ENCODE measurements at regions of chr6 and their contacts with region 1.

Region 1: GRCh38 chr6:142885182-142885867 is 59.7 kb downstream of the HIVEP2 start:
- DNase-seq: peak; percentile 89
- ATAC-seq: peak; percentile 70
- H3K4me3 ChIP-seq: peak overlapping the region; percentile 57
- H3K27ac ChIP-seq: peak overlapping the region; percentile 75
- H3K4me1 ChIP-seq: peaks cover 38% of the 10 kb centered on the region
- H3K27me3 ChIP-seq: no peaks in the 10 kb centered on the region
- CTCF ChIP-seq: no peak
- EP300 ChIP-seq: peak; percentile 93 to 97
- POLR2A ChIP-seq: peak; percentile 49
- RAD21 ChIP-seq: peak; percentile 14; the same call in 1 of the 2 replicates

Region 2: GRCh38 chr6:142746524-142746923 is 138.8 kb before region 1 on chr6:
- CTCF ChIA-PET with region 1: interaction called, 3 read pairs
- POLR2A ChIA-PET with region 1: interaction called, 3 read pairs
- RAD21 ChIA-PET with region 1: interaction called, 10 read pairs
- SMC1A ChIA-PET with region 1: interaction called, 33 read pairs
- in situ Hi-C with region 1: no loop called
- intact Hi-C with region 1: no loop called
- DNase-seq: no peak
- ATAC-seq: peak; percentile 92
- H3K4me3 ChIP-seq: no peak overlapping the region
- H3K27ac ChIP-seq: no peak overlapping the region
- H3K4me1 ChIP-seq: no peaks in the 10 kb centered on the region
- H3K27me3 ChIP-seq: no peaks in the 10 kb centered on the region
- CTCF ChIP-seq: peak; percentile 46 to 60 (median 56); a peak in 5 of 6 replicates
- EP300 ChIP-seq: no peak
- POLR2A ChIP-seq: no peak
- RAD21 ChIP-seq: peak; percentile 67

Region 3: DNA sequence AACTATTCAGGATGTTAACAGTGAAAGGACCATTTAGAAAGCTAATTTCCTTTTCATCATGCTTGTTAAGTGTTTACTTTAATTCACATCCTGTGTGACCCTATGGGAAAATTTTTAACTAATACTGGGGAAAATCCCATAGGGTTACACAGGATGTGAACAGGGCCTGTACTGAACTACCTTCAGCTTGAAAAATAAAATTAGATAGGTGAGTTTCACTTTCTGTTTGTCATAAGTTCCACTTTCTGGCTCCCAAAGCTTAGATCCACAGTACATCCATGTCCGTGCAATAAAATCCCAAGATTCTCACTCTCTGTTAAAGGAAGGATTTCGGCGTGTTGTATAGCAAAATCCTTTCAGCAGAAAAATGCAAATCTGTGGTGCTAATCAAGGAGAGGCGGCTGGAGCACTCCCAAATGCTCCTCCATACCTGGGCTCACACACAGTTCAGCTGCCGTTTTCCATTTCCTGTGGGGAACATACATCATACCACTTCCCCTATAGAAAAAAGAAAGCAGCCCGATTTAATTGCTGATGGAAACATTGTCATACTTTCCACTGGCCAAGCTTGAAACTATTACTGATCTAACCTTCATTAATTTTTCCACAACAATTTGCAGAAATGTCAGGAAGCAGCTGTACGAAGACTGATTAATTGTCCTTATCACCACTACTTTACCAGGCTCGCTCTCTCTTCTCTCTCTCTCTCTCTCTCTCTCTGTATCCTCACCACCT is 65.6 kb before region 1 on chr6:
- CTCF ChIA-PET with region 1: interaction called, 27 read pairs
- POLR2A ChIA-PET with region 1: interaction called, 30 read pairs
- RAD21 ChIA-PET with region 1: interaction called, 110 read pairs
- SMC1A ChIA-PET with region 1: interaction called, 201 read pairs
- in situ Hi-C with region 1: no loop called
- intact Hi-C with region 1: loop called (anchors 1 kb)
- DNase-seq: peak; percentile 90
- ATAC-seq: peak; percentile 67
- H3K4me3 ChIP-seq: peak overlapping the region; percentile 39; the same call in 1 of the 2 replicates
- H3K27ac ChIP-seq: peak overlapping the region; percentile 88
- H3K4me1 ChIP-seq: peaks cover 40% of the 10 kb centered on the region
- H3K27me3 ChIP-seq: no peaks in the 10 kb centered on the region
- CTCF ChIP-seq: no peak
- EP300 ChIP-seq: peak; percentile 51 to 97
- POLR2A ChIP-seq: no peak
- RAD21 ChIP-seq: 0 out of 2 replicates have a peak, but pooled peaks have one; percentile 4

Region 4: DNA sequence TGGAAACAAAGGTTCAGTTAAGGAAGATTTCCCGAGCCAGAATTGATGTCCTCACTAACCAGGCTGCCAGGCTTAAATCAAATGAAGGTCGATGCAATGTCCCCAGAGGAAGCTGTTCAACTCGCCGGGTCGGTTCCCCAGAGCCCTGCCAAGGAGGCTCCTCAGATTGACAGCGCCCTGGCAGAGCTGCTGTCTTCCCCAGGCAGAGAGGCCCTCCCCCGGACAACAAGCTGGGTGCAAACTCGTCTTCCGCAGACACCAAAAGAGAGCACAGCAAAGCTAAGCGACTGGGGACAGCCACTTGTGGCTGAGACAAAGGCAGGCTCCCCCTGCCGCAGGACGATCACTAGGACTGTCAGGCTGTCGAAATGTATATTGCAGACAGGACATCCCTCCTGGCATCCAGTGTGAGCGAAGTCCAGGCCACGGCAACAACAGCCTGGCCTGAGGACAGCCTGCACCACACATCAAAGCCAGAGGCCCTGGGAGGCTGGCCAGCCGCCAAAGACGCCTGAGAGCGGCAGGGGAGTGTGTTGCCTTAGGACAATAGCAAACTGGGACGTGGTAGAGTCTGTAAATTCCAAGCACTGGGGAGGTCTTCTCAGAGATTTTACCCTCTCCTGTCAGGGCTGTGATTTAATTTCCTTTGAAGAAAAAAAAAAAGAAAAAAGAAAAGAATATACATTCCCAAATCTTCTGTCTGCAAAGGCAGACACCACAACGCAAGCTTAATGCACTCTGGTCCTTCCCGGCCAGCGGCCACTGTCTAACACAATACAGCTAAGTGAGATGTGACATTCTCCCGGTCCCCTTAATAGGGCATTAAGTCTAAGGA is 39.5 kb before region 1 on chr6:
- CTCF ChIA-PET with region 1: interaction called, 25 read pairs
- POLR2A ChIA-PET with region 1: interaction called, 46 read pairs
- RAD21 ChIA-PET with region 1: interaction called, 95 read pairs
- SMC1A ChIA-PET with region 1: interaction called, 287 read pairs
- in situ Hi-C with region 1: no loop called
- intact Hi-C with region 1: loop called (anchors 1 kb)
- DNase-seq: no peak
- ATAC-seq: peak; percentile 23
- H3K4me3 ChIP-seq: peak overlapping the region; percentile 48; the same call in 1 of the 2 replicates
- H3K27ac ChIP-seq: peak overlapping the region; percentile 98
- H3K4me1 ChIP-seq: peaks cover 81% of the 10 kb centered on the region
- H3K27me3 ChIP-seq: no peaks in the 10 kb centered on the region
- CTCF ChIP-seq: no peak
- EP300 ChIP-seq: no peak
- POLR2A ChIP-seq: peak; percentile 67
- RAD21 ChIP-seq: no peak

Region 5: GRCh38 chr6:142863981-142864380 is 21.3 kb before region 1 on chr6:
- CTCF ChIA-PET with region 1: interaction called, 12 read pairs
- POLR2A ChIA-PET with region 1: interaction called, 78 read pairs
- RAD21 ChIA-PET with region 1: interaction called, 150 read pairs
- SMC1A ChIA-PET with region 1: interaction called, 213 read pairs
- in situ Hi-C with region 1: no loop called
- intact Hi-C with region 1: no loop called
- DNase-seq: no peak
- ATAC-seq: peak; percentile 10; the same call in 1 of the 3 replicates
- H3K4me3 ChIP-seq: no peak overlapping the region
- H3K27ac ChIP-seq: no peak overlapping the region; the same call in 1 of the 2 replicates
- H3K4me1 ChIP-seq: peaks cover 5% of the 10 kb centered on the region
- H3K27me3 ChIP-seq: no peaks in the 10 kb centered on the region
- CTCF ChIP-seq: no peak
- EP300 ChIP-seq: no peak
- POLR2A ChIP-seq: no peak
- RAD21 ChIP-seq: no peak

Region 6: DNA sequence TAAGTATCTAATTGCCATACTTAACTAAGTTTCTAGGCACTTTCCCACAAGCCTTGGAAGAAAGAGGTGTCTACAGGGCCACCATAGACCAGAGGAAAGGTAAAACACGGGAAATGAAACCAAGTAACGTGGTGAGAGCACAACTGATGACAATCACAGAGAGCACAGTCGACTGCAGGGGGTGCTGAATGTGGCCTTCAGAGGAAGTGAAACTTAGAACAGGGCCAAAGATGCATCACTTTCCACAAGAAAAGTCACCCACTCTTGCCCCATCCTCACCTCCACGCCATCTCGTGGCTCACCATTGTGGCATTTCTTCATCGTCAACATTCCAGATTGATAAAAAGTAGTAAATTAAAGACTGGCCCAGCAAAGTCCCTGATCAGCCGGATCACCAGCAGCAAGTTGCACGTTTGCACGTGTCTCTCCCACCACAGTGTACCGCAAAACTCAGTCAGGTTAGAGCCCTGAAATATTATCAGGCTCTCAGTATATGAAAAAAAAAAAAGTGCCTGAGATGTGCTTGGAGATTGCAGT is 28.3 kb after region 1 on chr6:
- CTCF ChIA-PET with region 1: interaction called, 5 read pairs
- POLR2A ChIA-PET with region 1: interaction called, 5 read pairs
- RAD21 ChIA-PET with region 1: interaction called, 22 read pairs
- SMC1A ChIA-PET with region 1: interaction called, 76 read pairs
- in situ Hi-C with region 1: no loop called
- intact Hi-C with region 1: loop called (anchors 1 kb)
- DNase-seq: peak; percentile 94
- ATAC-seq: peak; percentile 89
- H3K4me3 ChIP-seq: peak overlapping the region; percentile 27
- H3K27ac ChIP-seq: peak overlapping the region; percentile 95
- H3K4me1 ChIP-seq: peaks cover 32% of the 10 kb centered on the region
- H3K27me3 ChIP-seq: no peaks in the 10 kb centered on the region
- CTCF ChIP-seq: peak; percentile 11 to 27 (median 26); a peak in 3 of 6 replicates
- EP300 ChIP-seq: peak; percentile 72 to 97; a peak in 3 of 4 replicates
- POLR2A ChIP-seq: peak; percentile 43; the same call in 1 of the 2 replicates
- RAD21 ChIP-seq: peak; percentile 53

Region 7: DNA sequence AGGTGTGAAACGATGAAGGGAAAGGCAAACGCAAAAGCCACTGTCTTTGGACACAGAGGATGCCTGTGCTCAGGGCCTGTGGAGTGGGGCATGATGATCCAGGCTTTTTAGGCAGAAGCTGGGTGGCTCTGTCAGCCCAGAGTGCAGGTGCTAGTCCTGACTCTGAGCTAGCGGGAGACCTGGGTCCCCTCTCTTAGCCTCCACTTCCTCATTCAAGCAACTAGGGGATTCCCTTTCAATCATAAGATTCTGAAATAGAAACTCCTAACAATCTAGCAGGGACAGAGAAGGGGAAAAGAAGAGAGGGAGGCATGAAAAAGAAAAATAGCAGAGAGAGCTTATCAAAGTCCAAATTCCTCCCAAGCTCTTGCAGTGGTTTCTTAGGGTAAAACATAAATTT is 67.3 kb after region 1 on chr6:
- CTCF ChIA-PET with region 1: no interaction called
- POLR2A ChIA-PET with region 1: interaction called, 3 read pairs
- RAD21 ChIA-PET with region 1: interaction called, 13 read pairs
- SMC1A ChIA-PET with region 1: interaction called, 7 read pairs
- in situ Hi-C with region 1: no loop called
- intact Hi-C with region 1: loop called (anchors 1 kb)
- DNase-seq: no peak
- ATAC-seq: peak; percentile 86
- H3K4me3 ChIP-seq: no peak overlapping the region
- H3K27ac ChIP-seq: no peak overlapping the region; the same call in 1 of the 2 replicates
- H3K4me1 ChIP-seq: peaks cover 21% of the 10 kb centered on the region
- H3K27me3 ChIP-seq: no peaks in the 10 kb centered on the region
- CTCF ChIP-seq: 0 out of 6 replicates have a peak, but pooled peaks of 1 of the 3 experiments have one; percentile 7
- EP300 ChIP-seq: peak; percentile 14 to 63; a peak in 1 of 4 replicates
- POLR2A ChIP-seq: no peak
- RAD21 ChIP-seq: peak; percentile 34; the same call in 1 of the 2 replicates

Measured in GM12878 (cell line).